GM13977 (cell line): ENCODE measurements at regions of chr9 and their contacts with region 1.

Region 1: GRCh38 chr9:100714372-100715099 is 136.7 kb downstream of the CAVIN4 start:
- DNase-seq: peak; percentile 61
- CTCF ChIP-seq: peak; percentile 88

Region 2: GRCh38 chr9:101311758-101312420 is 597.4 kb after region 1 on chr9:
- in situ Hi-C with region 1: loop called (anchors 25 kb)
- DNase-seq: peak; percentile 66
- CTCF ChIP-seq: peak; percentile 63